ENCODE measurements at regions of chr2 and their contacts with region 1.

Region 1: GRCh38 chr2:58221909-58222308 is 19.2 kb downstream of the FANCL start:
- DNase-seq: no peak
- H3K4me3 Mint-ChIP-seq: no peak overlapping the region
- H3K27ac Mint-ChIP-seq: no peak overlapping the region
- H3K4me1 Mint-ChIP-seq: peaks cover 16% of the 10 kb centered on the region
- H3K27me3 Mint-ChIP-seq: no peaks in the 10 kb centered on the region
- CTCF ChIP-seq: no peak

Region 2: GRCh38 chr2:58240670-58241545 is 19.0 kb after region 1 on chr2 and contains the start of gene FANCL:
- CTCF ChIA-PET with region 1: no interaction called
- intact Hi-C with region 1: no loop called
- DNase-seq: peak; percentile 91
- H3K4me3 Mint-ChIP-seq: peak within 1 kb of the TSS; percentile 99
- H3K27ac Mint-ChIP-seq: peak within 1 kb of the TSS; percentile 95
- H3K4me1 Mint-ChIP-seq: peaks cover 18% of the 10 kb centered on the region
- H3K27me3 Mint-ChIP-seq: no peaks in the 10 kb centered on the region
- CTCF ChIP-seq: no peak
- total RNA-seq, gene FANCL: 33.1 and 40.5 TPM in 2 replicates

Region 3: DNA sequence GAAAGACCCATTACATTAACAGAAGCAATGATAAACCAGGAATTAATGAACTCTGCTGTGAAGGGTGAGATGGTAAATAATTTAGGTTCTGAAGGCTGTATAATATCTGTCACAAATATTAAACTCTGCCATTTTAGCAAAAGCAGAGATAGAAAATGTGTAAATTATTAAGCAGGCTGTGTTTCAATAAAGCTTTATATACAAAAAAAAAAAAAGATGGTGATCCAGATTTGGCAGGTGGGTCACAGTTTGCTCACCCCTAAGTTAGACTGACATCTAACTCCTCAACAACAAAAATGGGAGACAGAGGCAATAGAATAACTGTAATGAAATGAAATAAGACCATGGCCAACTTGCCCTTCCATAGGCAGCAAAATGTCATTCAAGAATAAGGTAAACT is 176.5 kb after region 1 on chr2:
- CTCF ChIA-PET with region 1: no interaction called
- intact Hi-C with region 1: no loop called
- DNase-seq: no peak
- H3K4me3 Mint-ChIP-seq: no peak overlapping the region
- H3K27ac Mint-ChIP-seq: no peak overlapping the region
- H3K4me1 Mint-ChIP-seq: no peaks in the 10 kb centered on the region
- H3K27me3 Mint-ChIP-seq: no peaks in the 10 kb centered on the region
- CTCF ChIP-seq: no peak

Region 4: DNA sequence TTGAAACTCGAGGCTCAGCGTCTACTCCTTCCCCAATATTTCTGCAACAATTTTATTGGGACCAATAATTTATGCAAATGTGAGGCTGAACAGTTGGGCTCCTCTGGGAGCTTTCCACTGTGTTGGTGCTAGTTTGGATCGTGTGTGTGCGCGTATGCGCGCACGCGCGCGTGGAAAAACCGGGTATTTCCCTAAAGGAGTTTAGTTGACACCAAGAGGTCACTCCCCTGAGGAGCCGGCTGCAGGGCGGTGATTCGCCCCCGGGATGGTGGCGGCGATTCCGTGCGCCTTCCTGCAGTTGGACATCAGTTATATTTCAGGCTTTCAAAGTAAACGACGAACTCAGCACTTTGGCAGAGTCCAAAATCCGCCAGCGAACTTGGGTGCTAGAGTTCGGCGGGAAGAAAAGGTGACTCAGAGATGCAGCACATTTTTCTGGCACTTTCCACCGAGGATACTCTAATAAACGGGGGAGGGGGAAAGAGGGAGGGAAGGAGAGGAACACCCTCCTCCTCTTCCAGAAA is 205.7 kb after region 1 on chr2:
- CTCF ChIA-PET with region 1: no interaction called
- intact Hi-C with region 1: no loop called
- DNase-seq: peak; percentile 47
- H3K4me3 Mint-ChIP-seq: peak overlapping the region; percentile 75
- H3K27ac Mint-ChIP-seq: peak overlapping the region; percentile 17
- H3K4me1 Mint-ChIP-seq: peaks cover 8% of the 10 kb centered on the region
- H3K27me3 Mint-ChIP-seq: no peaks in the 10 kb centered on the region
- CTCF ChIP-seq: no peak

Region 5: DNA sequence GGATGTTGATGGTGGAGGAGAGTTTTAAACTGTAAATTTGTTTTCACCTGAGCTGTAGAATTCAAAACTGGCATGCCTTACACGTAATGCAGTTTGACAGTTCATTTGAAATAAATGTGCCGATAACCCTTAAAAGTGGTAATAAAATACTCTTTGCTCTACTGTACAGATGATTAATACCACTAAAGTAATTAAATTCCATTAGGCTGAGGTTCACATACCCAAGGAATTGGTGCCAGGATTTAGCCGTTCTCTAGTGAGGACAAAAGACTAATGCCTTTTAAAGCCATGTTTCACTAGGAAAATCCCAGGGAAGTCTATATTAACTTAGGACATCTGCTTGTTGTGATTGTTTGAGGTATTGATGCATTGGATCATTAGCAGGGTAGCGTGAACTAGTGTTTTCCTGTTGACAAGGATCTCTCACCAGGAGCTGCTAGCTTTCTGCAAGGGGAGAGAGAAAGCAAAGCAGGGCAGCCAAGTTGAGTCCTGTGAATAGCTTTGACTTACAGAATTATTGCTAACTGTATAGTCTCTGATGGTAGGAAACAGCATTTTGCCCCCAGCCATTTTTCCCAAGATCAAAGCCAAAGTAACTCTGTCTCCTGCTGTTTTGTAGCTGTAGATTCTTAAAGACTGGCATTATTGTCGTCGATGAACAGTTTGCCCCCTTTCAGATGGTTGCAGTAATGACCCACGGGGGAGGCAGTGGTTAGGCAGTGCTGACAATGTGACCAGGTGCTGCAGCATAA is 300.1 kb after region 1 on chr2:
- CTCF ChIA-PET with region 1: no interaction called
- intact Hi-C with region 1: loop called (anchors 10 kb)
- DNase-seq: no peak
- H3K4me3 Mint-ChIP-seq: no peak overlapping the region
- H3K27ac Mint-ChIP-seq: no peak overlapping the region
- H3K4me1 Mint-ChIP-seq: no peaks in the 10 kb centered on the region
- H3K27me3 Mint-ChIP-seq: no peaks in the 10 kb centered on the region
- CTCF ChIP-seq: no peak